Activated CD4-positive, alpha-beta memory T cell treated with anti-CD3 and anti-CD28 coated beads for 36 hours (primary cell): ENCODE measurements at regions of chr3 and their contacts with region 1.

Region 1: GRCh38 chr3:158727206-158728060 is 4.8 kb downstream of the RARRES1 start:
- DNase-seq: peak; percentile 42
- H3K4me3 Mint-ChIP-seq: peak overlapping the region; percentile 46
- H3K27ac Mint-ChIP-seq: peak overlapping the region; percentile 33
- H3K4me1 Mint-ChIP-seq: peaks cover 30% of the 10 kb centered on the region
- H3K27me3 Mint-ChIP-seq: no peaks in the 10 kb centered on the region

Region 2: DNA sequence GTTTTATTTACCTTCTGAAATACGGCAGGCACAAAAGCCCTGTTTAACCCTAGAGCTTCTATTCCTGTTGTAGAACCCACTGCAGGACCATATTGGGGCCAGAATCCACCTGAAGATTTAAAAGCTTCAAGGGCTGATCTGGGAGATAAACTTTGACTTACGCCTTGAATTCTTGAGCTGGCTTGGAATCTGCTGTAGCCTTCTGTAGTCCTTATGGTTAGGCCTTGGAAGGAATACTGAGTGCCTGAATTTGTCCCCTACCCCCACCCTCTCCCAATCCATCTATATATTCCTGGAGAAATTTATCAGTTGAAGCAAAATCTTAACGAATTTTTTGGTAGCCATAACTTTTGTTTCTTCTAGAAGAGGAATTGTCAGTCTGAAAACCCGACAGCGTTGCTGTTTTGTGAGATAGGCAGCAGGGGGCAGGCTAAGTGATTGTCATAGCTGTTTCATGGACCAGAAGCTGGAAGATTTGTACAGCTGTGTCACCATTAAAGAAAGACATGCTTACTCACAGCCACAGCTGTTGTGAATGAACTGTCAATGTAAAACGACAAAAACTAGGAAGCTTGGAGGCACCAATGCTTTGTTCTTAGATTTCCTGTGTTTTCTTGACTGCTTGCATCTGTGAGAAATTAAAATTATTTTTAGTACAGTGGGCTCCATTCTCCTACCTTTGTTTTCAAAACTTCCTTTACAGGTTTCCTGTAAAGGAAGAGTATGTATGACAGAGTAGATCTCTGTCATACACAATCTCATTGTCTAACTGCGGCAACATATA is 67.8 kb before region 1 on chr3:
- CTCF ChIA-PET with region 1: interaction called, 21 read pairs
- POLR2A ChIA-PET with region 1: no interaction called
- intact Hi-C with region 1: no loop called
- DNase-seq: peak; percentile 72
- H3K4me3 Mint-ChIP-seq: no peak overlapping the region
- H3K27ac Mint-ChIP-seq: no peak overlapping the region
- H3K4me1 Mint-ChIP-seq: peaks cover 5% of the 10 kb centered on the region
- H3K27me3 Mint-ChIP-seq: no peaks in the 10 kb centered on the region

Region 3: GRCh38 chr3:158742871-158743663 is 15.6 kb after region 1 on chr3:
- CTCF ChIA-PET with region 1: interaction called, 26 read pairs
- POLR2A ChIA-PET with region 1: no interaction called
- intact Hi-C with region 1: no loop called
- DNase-seq: no peak
- H3K4me3 Mint-ChIP-seq: no peak overlapping the region
- H3K27ac Mint-ChIP-seq: no peak overlapping the region
- H3K4me1 Mint-ChIP-seq: peaks cover 13% of the 10 kb centered on the region
- H3K27me3 Mint-ChIP-seq: no peaks in the 10 kb centered on the region

Region 4: DNA sequence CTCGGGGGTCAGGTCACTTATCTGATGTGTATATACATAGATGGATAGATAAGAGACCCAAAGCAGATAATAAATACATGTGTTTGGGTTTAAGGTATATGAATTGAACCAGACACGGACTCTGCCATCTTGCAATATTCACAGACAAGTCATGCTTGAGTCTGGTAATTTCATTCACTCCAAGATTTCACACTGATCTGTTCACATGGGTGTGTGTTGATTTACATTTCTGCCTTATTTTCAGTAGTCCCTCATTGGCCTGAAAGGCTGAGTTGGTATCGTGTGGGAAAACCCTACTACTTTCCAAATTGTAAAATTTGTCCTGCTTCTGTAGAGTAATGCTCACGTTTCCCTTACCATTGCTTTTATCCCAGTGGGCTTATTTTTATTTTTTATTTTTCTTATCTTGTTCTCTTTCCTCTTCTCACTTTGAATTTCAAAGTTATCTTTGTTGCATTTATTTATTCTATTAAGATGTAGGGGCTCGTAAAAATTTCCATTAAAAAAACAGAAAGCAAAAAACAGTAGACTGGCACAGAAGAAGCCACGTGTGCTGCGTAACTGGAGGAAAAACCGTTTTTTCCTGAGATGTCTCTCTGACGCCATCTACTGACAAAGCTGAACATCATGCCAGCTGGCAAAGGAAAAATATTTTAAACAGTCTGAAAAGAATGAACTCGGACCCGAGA is 63.6 kb after region 1 on chr3:
- CTCF ChIA-PET with region 1: interaction called, 176 read pairs
- POLR2A ChIA-PET with region 1: no interaction called
- intact Hi-C with region 1: loop called (anchors 1 kb)
- DNase-seq: peak; percentile 23
- H3K4me3 Mint-ChIP-seq: peak overlapping the region; percentile 61
- H3K27ac Mint-ChIP-seq: no peak overlapping the region
- H3K4me1 Mint-ChIP-seq: peaks cover 3% of the 10 kb centered on the region
- H3K27me3 Mint-ChIP-seq: no peaks in the 10 kb centered on the region

Region 5: GRCh38 chr3:159260049-159260662 is 532.7 kb after region 1 on chr3:
- CTCF ChIA-PET with region 1: interaction called, 8 read pairs
- POLR2A ChIA-PET with region 1: no interaction called
- intact Hi-C with region 1: loop called (anchors 5 kb)
- DNase-seq: peak; percentile 24
- H3K4me3 Mint-ChIP-seq: no peak overlapping the region
- H3K27ac Mint-ChIP-seq: no peak overlapping the region
- H3K4me1 Mint-ChIP-seq: no peaks in the 10 kb centered on the region
- H3K27me3 Mint-ChIP-seq: peaks cover 8% of the 10 kb centered on the region